ENCODE measurements at regions of chr3 and their contacts with region 1.

Region 1: GRCh38 chr3:55721716-55722484 is 234.8 kb upstream of the WNT5A start:
- DNase-seq: peak; percentile 45
- H3K4me3 Mint-ChIP-seq: no peak overlapping the region
- H3K27ac Mint-ChIP-seq: no peak overlapping the region
- H3K4me1 Mint-ChIP-seq: no peaks in the 10 kb centered on the region
- H3K27me3 Mint-ChIP-seq: peaks cover 27% of the 10 kb centered on the region
- CTCF ChIP-seq: peak; percentile 60

Region 2: GRCh38 chr3:54427941-54428871 is 1293.7 kb before region 1 on chr3:
- CTCF ChIA-PET with region 1: no interaction called
- POLR2A ChIA-PET with region 1: no interaction called
- intact Hi-C with region 1: loop called (anchors 1 kb)
- DNase-seq: peak; percentile 62
- H3K4me3 Mint-ChIP-seq: no peak overlapping the region
- H3K27ac Mint-ChIP-seq: no peak overlapping the region
- H3K4me1 Mint-ChIP-seq: no peaks in the 10 kb centered on the region
- H3K27me3 Mint-ChIP-seq: peaks cover 12% of the 10 kb centered on the region
- CTCF ChIP-seq: peak; percentile 78

Region 3: GRCh38 chr3:54870423-54870822 is 851.5 kb before region 1 on chr3:
- CTCF ChIA-PET with region 1: interaction called, 8 read pairs
- POLR2A ChIA-PET with region 1: no interaction called
- intact Hi-C with region 1: loop called (anchors 1 kb)
- DNase-seq: peak; percentile 77
- H3K4me3 Mint-ChIP-seq: no peak overlapping the region
- H3K27ac Mint-ChIP-seq: no peak overlapping the region
- H3K4me1 Mint-ChIP-seq: peaks cover 41% of the 10 kb centered on the region
- H3K27me3 Mint-ChIP-seq: no peaks in the 10 kb centered on the region
- CTCF ChIP-seq: peak; percentile 69

Region 4: GRCh38 chr3:55042591-55042990 is 679.3 kb before region 1 on chr3:
- CTCF ChIA-PET with region 1: no interaction called
- POLR2A ChIA-PET with region 1: no interaction called
- intact Hi-C with region 1: loop called (anchors 2 kb)
- DNase-seq: peak; percentile 26
- H3K4me3 Mint-ChIP-seq: no peak overlapping the region
- H3K27ac Mint-ChIP-seq: no peak overlapping the region
- H3K4me1 Mint-ChIP-seq: no peaks in the 10 kb centered on the region
- H3K27me3 Mint-ChIP-seq: no peaks in the 10 kb centered on the region
- CTCF ChIP-seq: peak; percentile 30

Region 5: GRCh38 chr3:55485211-55485791 is 236.6 kb before region 1 on chr3:
- CTCF ChIA-PET with region 1: interaction called, 28 read pairs
- POLR2A ChIA-PET with region 1: interaction called, 4 read pairs
- intact Hi-C with region 1: loop called (anchors 1 kb)
- DNase-seq: peak; percentile 81
- H3K4me3 Mint-ChIP-seq: peak overlapping the region; percentile 97
- H3K27ac Mint-ChIP-seq: peak overlapping the region; percentile 79
- H3K4me1 Mint-ChIP-seq: peaks cover 22% of the 10 kb centered on the region
- H3K27me3 Mint-ChIP-seq: no peaks in the 10 kb centered on the region
- CTCF ChIP-seq: peak; percentile 63

Region 6: DNA sequence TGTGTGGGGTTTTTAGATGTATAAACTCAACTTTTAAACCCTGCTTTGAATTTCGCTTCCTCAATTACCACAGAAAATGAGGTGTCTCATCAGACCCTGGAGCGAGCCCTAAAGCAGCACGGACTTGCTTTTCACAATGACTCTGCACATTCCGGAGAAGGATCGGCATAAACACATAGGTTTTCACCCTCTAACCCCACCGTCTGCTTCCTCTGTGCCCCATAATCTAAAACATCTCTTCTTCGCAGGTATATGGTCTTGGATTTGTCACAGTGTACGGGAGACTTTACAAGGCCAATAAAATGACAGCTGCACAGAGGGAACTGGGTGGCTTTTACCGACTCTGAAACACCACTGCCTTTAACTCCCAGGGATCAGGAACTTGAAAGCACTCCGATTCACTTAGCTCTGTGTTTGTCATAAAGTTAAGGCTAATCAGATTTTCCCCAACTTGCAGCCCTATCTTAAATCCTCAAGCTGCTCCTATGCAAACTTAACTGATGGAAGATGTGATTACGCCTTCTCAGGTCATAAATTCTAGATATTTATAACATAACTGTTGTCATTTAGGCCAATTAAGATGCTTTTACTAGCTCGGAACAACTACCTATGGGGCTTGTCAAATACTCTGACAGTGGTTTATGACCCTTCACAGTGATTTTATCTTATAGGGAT is 101.4 kb before region 1 on chr3:
- CTCF ChIA-PET with region 1: no interaction called
- POLR2A ChIA-PET with region 1: no interaction called
- intact Hi-C with region 1: loop called (anchors 10 kb)
- DNase-seq: peak; percentile 42
- H3K4me3 Mint-ChIP-seq: no peak overlapping the region
- H3K27ac Mint-ChIP-seq: no peak overlapping the region
- H3K4me1 Mint-ChIP-seq: peaks cover 16% of the 10 kb centered on the region
- H3K27me3 Mint-ChIP-seq: no peaks in the 10 kb centered on the region
- CTCF ChIP-seq: no peak

Region 7: GRCh38 chr3:55780913-55781312 is 59.0 kb after region 1 on chr3:
- CTCF ChIA-PET with region 1: no interaction called
- POLR2A ChIA-PET with region 1: no interaction called
- intact Hi-C with region 1: no loop called
- DNase-seq: no peak
- H3K4me3 Mint-ChIP-seq: no peak overlapping the region
- H3K27ac Mint-ChIP-seq: no peak overlapping the region
- H3K4me1 Mint-ChIP-seq: no peaks in the 10 kb centered on the region
- H3K27me3 Mint-ChIP-seq: peaks cover 12% of the 10 kb centered on the region
- CTCF ChIP-seq: no peak

Region 8: DNA sequence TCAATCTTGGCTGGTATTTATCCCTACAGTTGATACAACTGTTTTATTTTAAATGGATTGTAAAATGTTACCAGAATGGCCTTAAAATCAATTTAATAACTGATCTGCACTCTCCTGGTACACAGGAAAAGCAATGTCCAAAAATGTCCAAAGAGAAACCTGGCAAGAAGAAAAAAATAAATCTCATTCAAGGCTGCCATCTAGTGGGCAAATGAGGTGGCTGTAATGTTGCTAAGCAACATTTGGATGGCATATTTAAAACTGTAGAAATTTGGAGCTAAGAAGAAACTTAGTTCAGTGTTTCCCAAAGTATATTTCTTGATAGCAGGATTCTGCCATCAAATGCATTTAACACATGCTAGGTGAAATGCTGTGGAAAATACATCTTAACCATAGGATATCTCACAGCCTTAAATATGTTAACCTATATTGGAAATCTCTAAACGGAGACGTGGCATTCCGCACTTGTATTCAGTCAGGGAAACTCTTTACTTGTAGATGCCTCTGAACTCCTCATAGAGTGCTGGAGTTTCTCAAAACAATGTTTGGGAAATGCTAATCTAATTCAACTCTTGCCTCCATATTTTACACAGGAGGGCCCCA is 529.5 kb after region 1 on chr3:
- CTCF ChIA-PET with region 1: interaction called, 4 read pairs
- POLR2A ChIA-PET with region 1: no interaction called
- intact Hi-C with region 1: loop called (anchors 5 kb)
- DNase-seq: peak; percentile 75
- H3K4me3 Mint-ChIP-seq: no peak overlapping the region
- H3K27ac Mint-ChIP-seq: no peak overlapping the region
- H3K4me1 Mint-ChIP-seq: no peaks in the 10 kb centered on the region
- H3K27me3 Mint-ChIP-seq: no peaks in the 10 kb centered on the region
- CTCF ChIP-seq: peak; percentile 62

Measured in MCF 10A (cell line).